ENCODE measurements at regions of chr10 and their contacts with region 1.

Region 1: GRCh38 chr10:100743626-100744135 is 1.7 kb upstream of the PAX2 start:
- DNase-seq: peak; percentile 85
- H3K4me3 ChIP-seq: no peak overlapping the region; a peak in 2 of 4 replicates
- H3K27ac ChIP-seq: no peak overlapping the region
- H3K4me1 ChIP-seq: peaks cover 0 to 21% of the 10 kb centered on the region in 2 experiments; a peak in 1 of 4 replicates
- H3K27me3 ChIP-seq: peaks cover 98% of the 10 kb centered on the region
- CTCF ChIP-seq: peak; percentile 73
- EP300 ChIP-seq: no peak
- RAD21 ChIP-seq: peak; percentile 87

Region 2: GRCh38 chr10:100518761-100519241 is 224.9 kb before region 1 on chr10:
- CTCF ChIA-PET with region 1: interaction called, 36 read pairs
- POLR2A ChIA-PET with region 1: no interaction called
- DNase-seq: peak; percentile 71
- H3K4me3 ChIP-seq: peak overlapping the region in 1 of 2 experiments; percentile 30; a peak in 2 of 4 replicates
- H3K27ac ChIP-seq: no peak overlapping the region
- H3K4me1 ChIP-seq: peaks cover 5 to 8% of the 10 kb centered on the region in 2 experiments; a peak in 3 of 4 replicates
- H3K27me3 ChIP-seq: no peaks in the 10 kb centered on the region
- CTCF ChIP-seq: peak; percentile 85
- EP300 ChIP-seq: no peak
- RAD21 ChIP-seq: peak; percentile 75

Region 3: GRCh38 chr10:100612601-100613595 is 130.8 kb before region 1 on chr10:
- CTCF ChIA-PET with region 1: interaction called, 13 read pairs
- POLR2A ChIA-PET with region 1: no interaction called
- DNase-seq: no peak
- H3K4me3 ChIP-seq: no peak overlapping the region
- H3K27ac ChIP-seq: no peak overlapping the region
- H3K4me1 ChIP-seq: no peaks in the 10 kb centered on the region
- H3K27me3 ChIP-seq: peaks cover 28% of the 10 kb centered on the region; the same call in 1 of the 2 replicates
- CTCF ChIP-seq: no peak
- EP300 ChIP-seq: no peak
- RAD21 ChIP-seq: no peak

Region 4: DNA sequence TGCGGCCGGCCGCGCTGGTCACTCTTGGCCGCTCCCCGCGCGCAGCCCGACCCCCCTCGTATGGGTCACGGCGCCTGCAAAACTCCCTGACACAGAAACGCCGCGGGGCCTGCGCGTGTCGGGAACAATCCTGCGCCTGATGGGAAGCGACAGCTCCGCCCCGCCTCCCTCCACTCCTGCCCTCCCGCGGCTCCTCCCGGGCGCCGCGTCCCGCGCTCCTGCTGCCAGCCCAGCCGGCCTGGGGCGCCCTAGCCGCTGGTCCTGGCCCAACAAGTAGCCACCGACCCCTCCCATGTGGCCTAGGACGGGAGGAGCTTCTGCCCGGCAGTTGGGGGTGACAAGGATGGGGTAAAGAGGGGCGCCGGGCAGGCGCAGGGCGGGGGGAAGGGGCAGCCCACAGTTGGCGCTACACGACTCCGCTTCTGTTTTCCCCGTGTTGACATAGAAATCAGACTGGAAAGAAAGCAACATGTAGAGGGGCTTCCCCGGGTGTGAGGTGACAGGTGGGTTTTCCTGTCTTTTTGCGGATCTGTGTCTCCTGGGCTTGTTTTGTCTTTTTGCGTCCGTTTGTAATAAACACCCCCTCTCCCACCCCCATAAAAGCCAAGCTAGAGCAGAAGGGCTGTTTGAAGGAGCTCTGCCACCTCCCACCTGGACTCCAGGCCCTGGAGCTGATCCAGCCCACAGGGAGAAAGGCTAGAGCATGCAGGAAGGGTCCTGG is 33.4 kb before region 1 on chr10:
- CTCF ChIA-PET with region 1: interaction called, 19 read pairs
- POLR2A ChIA-PET with region 1: no interaction called
- DNase-seq: peak; percentile 90
- H3K4me3 ChIP-seq: peak overlapping the region in 1 of 2 experiments; percentile 29; a peak in 2 of 4 replicates
- H3K27ac ChIP-seq: peak overlapping the region in 1 of 2 experiments; percentile 45; a peak in 2 of 4 replicates
- H3K4me1 ChIP-seq: peaks cover 0 to 49% of the 10 kb centered on the region in 2 experiments; a peak in 2 of 4 replicates
- H3K27me3 ChIP-seq: peaks cover 38% of the 10 kb centered on the region
- CTCF ChIP-seq: no peak
- EP300 ChIP-seq: peak in 1 of 2 experiments; percentile 17; a peak in 1 of 4 replicates
- RAD21 ChIP-seq: no peak

Region 5: DNA sequence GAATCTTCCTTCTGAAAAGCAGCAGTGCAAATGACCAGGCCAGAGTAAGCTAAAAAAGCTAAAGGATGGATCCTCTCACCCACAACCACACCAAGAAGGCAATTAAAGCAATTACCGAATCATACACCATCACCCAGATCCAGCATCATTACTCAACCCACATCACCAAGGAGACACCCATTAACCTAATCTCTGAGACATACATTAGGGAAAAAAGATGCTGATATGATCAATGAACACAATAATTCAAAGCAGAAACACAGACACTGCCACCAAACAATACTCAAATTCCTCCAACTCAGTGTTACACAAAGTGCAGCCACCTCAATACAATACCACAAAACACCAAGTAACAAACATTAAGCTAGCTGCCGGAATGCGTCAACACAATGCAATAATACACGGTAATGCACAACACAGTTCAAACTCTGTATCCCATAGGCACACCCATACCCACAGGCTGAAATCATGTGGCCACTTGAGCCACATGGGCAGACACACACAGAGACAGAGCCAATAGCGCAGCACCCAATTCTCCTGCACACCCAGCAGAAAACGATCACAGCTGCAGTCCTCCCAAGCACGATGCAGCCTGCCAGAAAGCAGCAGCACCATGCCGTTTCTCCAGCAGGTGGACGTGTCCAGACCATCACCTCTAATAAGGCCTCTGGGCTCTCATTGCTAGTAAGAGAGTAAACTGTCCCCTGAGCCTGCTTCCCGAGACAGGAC is 23.2 kb after region 1 on chr10:
- CTCF ChIA-PET with region 1: interaction called, 65 read pairs
- POLR2A ChIA-PET with region 1: no interaction called
- DNase-seq: peak; percentile 76
- H3K4me3 ChIP-seq: no peak overlapping the region
- H3K27ac ChIP-seq: peak overlapping the region in 1 of 2 experiments; percentile 97; a peak in 2 of 4 replicates
- H3K4me1 ChIP-seq: peaks cover 0 to 35% of the 10 kb centered on the region in 2 experiments; a peak in 2 of 4 replicates
- H3K27me3 ChIP-seq: peaks cover 37% of the 10 kb centered on the region
- CTCF ChIP-seq: no peak
- EP300 ChIP-seq: peak in 1 of 2 experiments; percentile 79; a peak in 2 of 4 replicates
- RAD21 ChIP-seq: peak; percentile 49

Region 6: GRCh38 chr10:100847440-100847839 is 103.8 kb after region 1 on chr10:
- CTCF ChIA-PET with region 1: interaction called, 11 read pairs
- POLR2A ChIA-PET with region 1: interaction called, 4 read pairs
- DNase-seq: no peak
- H3K4me3 ChIP-seq: no peak overlapping the region
- H3K27ac ChIP-seq: no peak overlapping the region
- H3K4me1 ChIP-seq: no peaks in the 10 kb centered on the region
- H3K27me3 ChIP-seq: peaks cover 29% of the 10 kb centered on the region
- CTCF ChIP-seq: no peak
- EP300 ChIP-seq: no peak
- RAD21 ChIP-seq: no peak